Activated naive CD4-positive, alpha-beta T cell treated with anti-CD3 and anti-CD28 coated beads, Interleukin-2, amount 10 ng/mL, durations not matched to agents 7 days and 5 days (primary cell): ENCODE measurements at regions of chr3 and their contacts with region 1.

Region 1: DNA sequence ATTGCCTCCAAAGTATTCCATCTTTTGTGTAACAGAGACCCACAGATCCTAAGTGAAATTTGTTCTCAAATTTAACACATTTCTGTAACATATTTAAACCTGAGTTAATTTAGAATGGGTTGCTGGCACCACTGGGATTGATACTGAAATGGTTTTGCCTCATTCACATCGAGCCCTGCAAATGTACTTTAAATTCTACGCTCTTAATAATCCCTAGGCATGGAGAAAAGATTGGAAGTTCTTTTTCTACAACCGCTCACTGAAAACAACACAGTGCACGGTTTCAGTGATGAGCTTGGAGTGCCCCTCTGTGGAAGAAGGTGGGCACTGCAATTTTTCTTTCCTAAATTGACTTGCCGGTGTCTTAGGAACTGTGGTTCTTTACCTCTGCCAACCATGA is 109.9 kb upstream of the ATP11B start:
- DNase-seq: peak; percentile 73
- H3K4me3 Mint-ChIP-seq: peak overlapping the region; percentile 41
- H3K27ac Mint-ChIP-seq: no peak overlapping the region
- H3K4me1 Mint-ChIP-seq: peaks cover 10% of the 10 kb centered on the region
- H3K27me3 Mint-ChIP-seq: peaks cover 48% of the 10 kb centered on the region

Region 2: DNA sequence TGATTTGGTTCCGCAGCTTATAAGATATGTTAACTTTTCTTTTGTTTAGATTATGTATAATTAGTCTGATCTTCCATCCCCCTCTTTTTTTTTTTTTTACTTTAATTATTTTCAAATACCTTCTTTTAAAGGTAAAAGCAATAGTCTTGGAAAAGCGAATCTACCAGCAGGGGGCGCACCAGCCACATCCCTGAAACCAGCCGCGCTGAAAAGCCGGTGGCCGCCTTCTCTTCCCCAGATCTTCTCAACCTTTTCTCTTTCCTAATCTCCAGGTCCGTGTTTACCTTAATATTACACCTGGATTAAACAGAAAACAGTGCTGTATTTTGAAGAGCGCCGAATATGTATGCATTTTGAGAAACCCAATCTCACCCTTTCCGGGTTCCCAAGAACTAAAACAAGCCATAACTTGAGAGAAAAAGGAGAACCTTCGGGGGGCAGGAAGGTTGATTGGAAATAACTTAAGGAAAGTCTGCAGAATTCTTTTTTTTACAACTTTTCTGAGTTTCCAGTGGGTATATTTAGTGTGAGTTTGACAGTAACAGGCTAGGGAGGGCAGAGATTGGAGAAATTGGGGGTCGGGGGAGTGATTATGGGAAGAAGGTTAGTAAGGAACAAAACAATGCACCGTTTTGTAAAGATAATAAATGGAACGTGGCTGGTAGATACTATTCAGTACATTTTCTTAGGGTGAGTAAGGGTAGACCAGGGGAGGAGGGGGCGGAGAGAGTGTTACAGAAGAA is 973.7 kb before region 1 on chr3:
- CTCF ChIA-PET with region 1: interaction called, 10 read pairs
- DNase-seq: peak; percentile 73
- H3K4me3 Mint-ChIP-seq: peak overlapping the region; percentile 33
- H3K27ac Mint-ChIP-seq: peak overlapping the region; percentile 72
- H3K4me1 Mint-ChIP-seq: peaks cover 8% of the 10 kb centered on the region
- H3K27me3 Mint-ChIP-seq: peaks cover 26% of the 10 kb centered on the region

Region 3: GRCh38 chr3:182855076-182855475 is 171.6 kb after region 1 on chr3:
- CTCF ChIA-PET with region 1: no interaction called
- DNase-seq: no peak
- H3K4me3 Mint-ChIP-seq: no peak overlapping the region
- H3K27ac Mint-ChIP-seq: no peak overlapping the region
- H3K4me1 Mint-ChIP-seq: peaks cover 3% of the 10 kb centered on the region
- H3K27me3 Mint-ChIP-seq: no peaks in the 10 kb centered on the region